Cardiac septum (tissue), 1 donor: ENCODE measurements at regions of chr19 and their contacts with region 1.

Region 1: GRCh38 chr19:47863514-47863936 is 4.5 kb downstream of the TPRX2 start:
- DNase-seq: peak; percentile 86

Region 2: GRCh38 chr19:47765523-47766358 is 97.8 kb before region 1 on chr19:
- intact Hi-C with region 1: loop called (anchors 2 kb)
- DNase-seq: no peak

Region 3: DNA sequence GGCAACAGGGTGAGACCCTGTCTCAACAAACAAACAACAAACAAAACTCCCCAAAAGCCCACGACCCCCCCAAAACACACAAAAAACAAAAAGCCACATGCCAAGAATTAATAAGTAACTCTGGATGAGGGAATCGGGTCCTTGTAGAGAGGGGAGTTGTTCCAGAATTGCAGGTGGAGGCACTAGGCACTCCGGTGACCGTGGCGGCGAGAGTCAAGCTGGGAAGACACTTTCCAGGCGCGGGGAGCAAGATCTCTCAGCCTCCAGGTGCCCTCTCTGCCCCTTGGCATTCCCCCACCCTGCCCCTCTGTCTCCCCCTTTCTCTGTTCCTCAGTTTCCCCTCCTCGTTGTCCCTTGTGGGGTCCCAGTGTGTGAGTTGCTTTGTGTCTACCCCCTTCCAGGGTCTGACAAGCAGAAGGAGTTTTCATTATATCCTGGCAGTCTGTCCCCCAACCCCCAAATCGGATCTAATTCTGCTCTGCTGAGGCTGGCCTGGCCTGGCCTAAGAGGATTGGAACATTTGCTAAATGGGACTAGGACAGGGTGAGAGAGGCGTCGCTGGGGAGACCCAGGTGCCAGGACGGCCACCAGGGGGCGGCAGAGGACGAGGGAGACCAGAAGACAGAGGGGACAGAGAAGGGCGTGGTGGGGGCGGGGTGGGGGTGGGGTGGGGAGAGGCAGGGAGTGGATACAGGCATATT is 50.1 kb before region 1 on chr19:
- intact Hi-C with region 1: loop called (anchors 10 kb)
- DNase-seq: peak; percentile 84